Psoas muscle (tissue), 8 donors: ENCODE measurements at regions of chr14 and their contacts with region 1.

Region 1: DNA sequence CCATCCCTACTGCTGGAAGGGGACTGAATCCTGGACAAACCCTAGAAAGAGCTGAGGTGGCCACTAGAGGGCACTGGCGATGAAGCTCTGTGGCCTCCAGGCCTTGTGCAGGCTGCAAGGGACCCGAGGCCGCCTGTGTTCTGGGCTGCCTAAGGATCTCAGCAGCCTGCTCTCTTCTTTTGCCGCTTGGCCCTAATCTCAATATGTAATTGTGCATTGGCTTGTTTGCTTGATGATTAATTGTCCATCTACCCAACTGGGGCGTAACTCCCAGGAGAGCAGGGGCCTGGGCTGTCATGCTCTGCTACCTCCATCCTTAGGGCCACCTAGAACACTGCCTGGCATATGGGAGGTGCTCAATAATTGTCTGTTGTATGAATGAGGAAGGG is 73.8 kb downstream of the SYNE3 start:
- DNase-seq: peak; percentile 82 to 88
- ATAC-seq: peak; percentile 95 to 99 (median 96)
- H3K4me3 ChIP-seq: no peak overlapping the region
- H3K27ac ChIP-seq: no peak overlapping the region
- H3K4me1 ChIP-seq: no peaks in the 10 kb centered on the region
- H3K27me3 ChIP-seq: no peaks in the 10 kb centered on the region
- CTCF ChIP-seq: peak; percentile 89

Region 2: DNA sequence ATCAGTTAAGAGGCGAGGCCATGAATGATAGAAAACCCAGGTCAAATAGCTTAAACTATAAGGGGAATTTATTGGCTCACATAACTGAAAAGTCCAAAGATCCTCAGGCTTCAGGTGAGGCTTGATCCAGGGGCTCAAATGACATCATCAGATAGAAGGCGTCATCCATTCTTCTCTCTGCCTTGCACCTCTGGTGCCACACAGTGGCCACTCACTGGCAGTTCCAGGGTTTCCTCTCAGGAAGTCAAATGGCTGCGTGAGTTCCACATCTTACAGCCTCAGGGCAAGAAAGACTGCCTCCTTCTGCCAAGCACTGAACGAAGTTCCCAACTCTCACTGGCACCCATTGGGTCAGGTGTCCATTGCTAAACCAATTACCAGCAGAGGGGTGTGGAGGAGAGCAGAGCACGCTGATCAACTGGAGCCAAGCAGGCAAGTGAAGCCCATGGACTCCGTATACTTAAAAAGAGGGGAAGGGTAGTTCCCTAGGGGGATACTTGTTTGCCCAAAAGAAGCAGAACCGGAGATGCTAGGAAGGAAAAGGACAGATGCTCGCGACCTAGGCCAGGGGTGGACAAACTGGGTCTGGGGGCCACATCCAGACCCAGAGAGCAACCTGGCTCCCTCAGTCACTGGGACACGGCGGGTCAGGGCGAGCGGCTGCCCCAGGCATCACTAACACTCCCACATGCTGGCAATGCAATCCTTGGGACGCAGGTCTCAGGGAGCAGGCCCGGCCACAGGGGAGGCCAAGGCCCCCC is 761.1 kb before region 1 on chr14:
- intact Hi-C with region 1: loop called (anchors 5 to 10 kb)
- DNase-seq: no peak
- ATAC-seq: peak in 3 of 4 donors; percentile 75 to 83 (median 76)
- H3K4me3 ChIP-seq: no peak overlapping the region
- H3K27ac ChIP-seq: no peak overlapping the region
- H3K4me1 ChIP-seq: no peaks in the 10 kb centered on the region
- H3K27me3 ChIP-seq: no peaks in the 10 kb centered on the region
- CTCF ChIP-seq: peak; percentile 32

Region 3: DNA sequence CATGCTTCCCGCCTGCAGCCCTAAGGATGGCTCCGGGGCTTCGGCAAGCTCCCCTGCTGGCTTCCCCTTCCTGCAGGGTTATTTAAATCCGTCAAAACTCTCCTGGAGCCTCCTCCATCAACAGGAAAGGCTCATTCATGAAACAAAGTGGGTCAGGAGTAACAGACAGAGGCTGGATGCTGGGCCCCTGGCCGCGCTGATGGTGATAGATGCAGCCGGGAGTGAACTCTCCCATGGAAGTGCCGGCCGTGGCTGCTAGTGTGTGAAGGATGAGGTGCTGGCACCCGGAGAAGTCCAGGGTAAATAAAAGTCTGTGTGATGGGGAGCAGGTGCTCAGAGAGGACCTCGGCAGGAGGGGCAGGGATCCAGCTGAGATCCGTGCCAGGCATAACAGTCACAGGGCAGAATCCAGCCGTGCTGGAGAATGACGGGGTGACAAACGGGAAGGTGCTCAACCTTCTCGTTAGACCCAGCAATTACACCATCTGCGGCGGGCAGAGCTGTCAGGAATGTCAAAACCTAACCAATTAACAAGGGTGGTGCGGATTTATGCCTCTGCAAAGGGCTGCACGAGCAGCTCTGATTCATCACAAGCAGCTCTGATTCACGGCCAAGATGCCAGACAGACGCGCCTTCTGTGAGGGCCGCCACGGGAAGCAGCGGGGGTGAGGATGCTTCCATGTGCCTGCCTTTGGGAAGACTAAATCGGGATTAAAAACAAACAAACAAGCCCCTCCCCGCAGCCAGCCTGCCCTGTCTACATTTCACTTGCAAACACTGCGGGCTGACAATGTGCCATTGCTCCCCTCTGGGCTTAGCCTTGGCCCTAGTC is 18.2 kb after region 1 on chr14:
- intact Hi-C with region 1: no loop called
- DNase-seq: peak in 1 of 2 donors; percentile 43
- ATAC-seq: peak; percentile 37 to 65 (median 47)
- H3K4me3 ChIP-seq: no peak overlapping the region
- H3K27ac ChIP-seq: no peak overlapping the region
- H3K4me1 ChIP-seq: peaks cover 28% of the 10 kb centered on the region
- H3K27me3 ChIP-seq: no peaks in the 10 kb centered on the region
- CTCF ChIP-seq: no peak

Region 4: DNA sequence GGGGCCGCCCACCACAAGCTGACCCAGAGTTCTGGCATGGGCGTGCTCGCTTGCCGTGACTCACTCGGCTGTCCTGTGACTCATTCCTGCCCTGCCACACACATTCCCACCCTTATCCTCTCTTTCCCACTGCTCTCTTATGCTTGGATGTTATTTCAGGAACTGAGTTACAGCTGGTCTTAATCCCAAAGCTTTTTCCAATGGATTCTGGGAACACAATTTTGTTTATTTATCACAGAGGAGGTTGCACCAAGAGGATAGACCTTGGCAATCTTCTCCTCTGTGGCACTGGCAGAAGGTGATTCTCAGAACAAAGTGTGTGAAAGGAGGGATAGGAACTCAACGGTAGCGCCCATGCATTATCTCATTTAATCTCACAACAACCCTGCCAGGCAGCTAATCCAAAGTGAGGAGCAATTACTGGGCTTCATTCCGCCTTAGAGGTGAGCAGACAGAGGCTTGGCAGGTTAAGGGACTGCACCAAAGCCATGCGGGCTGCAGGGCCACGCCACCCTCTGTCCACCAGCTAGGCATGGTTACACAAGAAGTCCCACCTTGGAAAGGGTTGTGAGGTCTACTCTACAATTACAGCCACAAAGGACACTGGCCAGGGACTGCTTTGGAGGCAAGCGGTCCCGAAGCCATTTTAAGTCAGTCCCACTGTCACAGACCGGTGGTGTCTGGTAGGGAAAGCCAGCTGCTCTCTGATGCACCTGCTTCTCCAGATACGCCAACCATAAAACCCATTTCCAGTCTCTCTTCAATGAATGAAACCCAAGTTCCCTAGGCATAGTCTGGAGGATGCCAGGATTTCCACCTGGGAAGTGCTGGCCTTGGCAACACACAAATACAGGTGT is 40.9 kb after region 1 on chr14:
- intact Hi-C with region 1: no loop called
- DNase-seq: peak; percentile 83 to 87
- ATAC-seq: peak; percentile 88 to 95 (median 93)
- H3K4me3 ChIP-seq: no peak overlapping the region
- H3K27ac ChIP-seq: peak overlapping the region; percentile 61
- H3K4me1 ChIP-seq: peaks cover 11% of the 10 kb centered on the region
- H3K27me3 ChIP-seq: no peaks in the 10 kb centered on the region
- CTCF ChIP-seq: no peak

Region 5: GRCh38 chr14:95527387-95528002 is 84.9 kb after region 1 on chr14:
- intact Hi-C with region 1: loop called (anchors 1 to 2 kb)
- DNase-seq: no peak
- ATAC-seq: peak; percentile 53 to 70 (median 57)
- H3K4me3 ChIP-seq: no peak overlapping the region
- H3K27ac ChIP-seq: no peak overlapping the region
- H3K4me1 ChIP-seq: peaks cover 39% of the 10 kb centered on the region
- H3K27me3 ChIP-seq: no peaks in the 10 kb centered on the region
- CTCF ChIP-seq: peak; percentile 75

Region 6: DNA sequence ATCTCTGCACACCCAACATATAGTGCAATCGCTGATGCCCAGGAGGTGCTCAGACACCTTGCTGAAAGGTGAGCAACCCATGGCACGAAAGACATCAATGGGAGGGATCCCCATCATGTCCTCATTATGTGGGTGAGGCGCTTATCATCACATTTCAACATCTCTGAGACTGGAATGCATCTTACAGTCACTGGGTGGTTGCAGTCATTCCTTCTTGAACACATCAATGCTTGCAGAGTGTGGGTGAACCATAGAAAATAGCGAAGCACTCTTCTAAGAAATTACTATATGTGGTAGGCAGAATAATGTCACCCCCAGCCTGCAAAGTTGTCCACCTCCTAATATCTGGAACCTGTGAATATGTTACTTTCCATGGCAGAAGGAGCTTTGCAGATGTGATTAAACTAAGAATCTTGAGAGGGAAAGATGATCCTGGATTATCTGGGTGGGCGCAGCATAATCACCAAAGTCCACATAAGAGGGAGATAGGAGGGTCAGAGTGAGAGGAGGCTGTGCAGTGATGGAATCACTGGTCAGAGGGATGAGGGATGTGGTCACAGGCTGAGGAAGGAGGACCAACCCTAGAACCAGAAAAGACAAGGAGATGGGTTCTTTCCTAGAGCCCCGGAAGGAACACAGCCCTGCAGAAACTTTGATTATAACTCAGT is 143.5 kb after region 1 on chr14:
- intact Hi-C with region 1: no loop called
- DNase-seq: no peak
- ATAC-seq: no peak
- H3K4me3 ChIP-seq: no peak overlapping the region
- H3K27ac ChIP-seq: no peak overlapping the region
- H3K4me1 ChIP-seq: no peaks in the 10 kb centered on the region
- H3K27me3 ChIP-seq: no peaks in the 10 kb centered on the region
- CTCF ChIP-seq: no peak